HEK293 (cell line): ENCODE measurements at regions of chr2 and their contacts with region 1.

Region 1: DNA sequence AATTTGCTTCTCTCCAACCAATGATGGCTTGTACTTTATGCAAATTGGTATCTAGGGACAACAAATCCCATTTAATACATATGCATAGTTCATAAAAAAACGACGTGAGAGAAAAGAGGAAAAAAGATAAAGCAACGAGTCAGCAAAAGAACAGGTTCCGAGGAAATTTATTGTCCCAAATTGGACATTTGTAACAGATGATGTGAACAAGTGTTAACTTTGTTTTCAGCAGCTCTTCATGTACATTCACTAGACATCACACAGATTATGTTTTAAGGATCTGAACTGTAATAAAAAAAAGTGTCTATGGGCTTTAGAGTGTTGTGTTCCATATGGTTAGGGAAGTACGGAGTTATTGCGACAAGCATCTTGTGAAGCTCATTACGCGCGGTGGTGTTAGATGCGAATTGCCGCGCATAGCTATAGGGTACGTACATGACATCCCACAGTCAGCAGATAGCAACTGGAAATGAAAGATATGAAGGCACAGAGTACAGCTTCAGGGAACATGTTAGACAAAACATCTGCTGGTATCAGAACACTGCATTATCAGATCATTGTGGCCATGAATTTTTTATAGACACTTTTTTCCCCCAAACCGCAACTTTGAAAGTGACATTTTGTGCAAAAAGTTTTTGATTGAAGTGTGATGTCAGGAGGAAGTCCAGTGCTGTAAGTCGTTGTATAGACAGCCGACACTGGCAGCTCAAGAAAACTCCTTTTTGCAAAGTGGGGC is 1073.1 kb upstream of the FANCL start:
- H3K4me3 ChIP-seq: no peak overlapping the region
- H3K27ac ChIP-seq: no peak overlapping the region
- H3K4me1 ChIP-seq: no peaks in the 10 kb centered on the region
- CTCF ChIP-seq: no peak

Region 2: GRCh38 chr2:59301466-59302402 is 12.5 kb before region 1 on chr2:
- CTCF ChIA-PET with region 1: interaction called, 15 read pairs
- POLR2A ChIA-PET with region 1: no interaction called
- H3K4me3 ChIP-seq: no peak overlapping the region
- H3K27ac ChIP-seq: no peak overlapping the region
- H3K4me1 ChIP-seq: no peaks in the 10 kb centered on the region
- CTCF ChIP-seq: peak; percentile 45; the same call in 1 of the 2 replicates